B cell (primary cell): ENCODE measurements at regions of chr14 and their contacts with region 1.

Region 1: DNA sequence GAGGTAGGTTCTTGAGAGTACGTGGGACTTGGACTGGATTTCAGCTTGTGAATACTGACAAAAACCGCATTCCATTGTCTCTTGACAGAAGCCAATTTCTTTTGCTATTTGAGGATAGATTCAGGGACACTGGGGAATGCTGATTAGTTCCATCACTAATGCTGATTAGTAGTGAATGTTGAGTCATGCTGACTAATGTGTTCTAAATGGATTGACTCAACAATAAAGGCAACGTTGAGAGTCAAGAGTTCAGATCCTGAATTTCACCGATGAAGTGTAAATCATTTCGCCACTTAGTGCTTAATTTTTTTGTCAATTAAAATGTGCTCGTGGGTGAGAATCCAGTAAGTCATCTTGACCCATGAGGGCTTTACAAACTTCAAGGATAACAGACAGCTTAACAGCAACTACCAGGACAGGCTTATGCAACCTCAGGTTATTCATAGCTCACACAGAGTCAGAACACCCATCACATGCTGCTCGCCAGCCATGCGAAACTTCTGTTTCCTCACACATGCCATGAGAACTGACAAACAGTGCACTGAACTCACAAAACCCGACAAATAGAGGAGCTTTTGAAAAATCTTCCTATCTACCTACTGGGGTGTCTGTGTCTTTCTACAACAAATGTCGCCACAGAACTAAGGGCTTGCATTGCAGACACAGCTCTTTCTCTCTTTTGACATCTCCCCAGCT is 316.5 kb downstream of the ZFP36L1 start:
- DNase-seq: peak; percentile 89
- ATAC-seq: peak; percentile 90
- H3K4me3 ChIP-seq: peak overlapping the region in 1 of 5 experiments; percentile 21
- H3K4me3 Mint-ChIP-seq: peak overlapping the region; percentile 72
- H3K27ac ChIP-seq: peak overlapping the region; percentile 95 to 99
- H3K27ac Mint-ChIP-seq: peak overlapping the region; percentile 98
- H3K4me1 ChIP-seq: peaks cover 73 to 77% of the 10 kb centered on the region in 2 donors
- H3K4me1 Mint-ChIP-seq: peaks cover 84% of the 10 kb centered on the region
- H3K27me3 ChIP-seq: no peaks in the 10 kb centered on the region
- H3K27me3 Mint-ChIP-seq: no peaks in the 10 kb centered on the region
- CTCF ChIP-seq: no peak

Region 2: GRCh38 chr14:68268197-68268596 is 208.2 kb before region 1 on chr14:
- CTCF ChIA-PET with region 1: no interaction called
- POLR2A ChIA-PET with region 1: no interaction called
- intact Hi-C with region 1: loop called (anchors 5 kb)
- DNase-seq: peak; percentile 92
- ATAC-seq: peak; percentile 71
- H3K4me3 ChIP-seq: peak overlapping the region in 1 of 5 experiments; percentile 14
- H3K4me3 Mint-ChIP-seq: peak overlapping the region; percentile 72
- H3K27ac ChIP-seq: peak overlapping the region; percentile 78 to 94
- H3K27ac Mint-ChIP-seq: peak overlapping the region; percentile 95
- H3K4me1 ChIP-seq: peaks cover 78 to 89% of the 10 kb centered on the region in 2 donors
- H3K4me1 Mint-ChIP-seq: peaks cover 80% of the 10 kb centered on the region
- H3K27me3 ChIP-seq: no peaks in the 10 kb centered on the region
- H3K27me3 Mint-ChIP-seq: no peaks in the 10 kb centered on the region
- CTCF ChIP-seq: no peak

Region 3: DNA sequence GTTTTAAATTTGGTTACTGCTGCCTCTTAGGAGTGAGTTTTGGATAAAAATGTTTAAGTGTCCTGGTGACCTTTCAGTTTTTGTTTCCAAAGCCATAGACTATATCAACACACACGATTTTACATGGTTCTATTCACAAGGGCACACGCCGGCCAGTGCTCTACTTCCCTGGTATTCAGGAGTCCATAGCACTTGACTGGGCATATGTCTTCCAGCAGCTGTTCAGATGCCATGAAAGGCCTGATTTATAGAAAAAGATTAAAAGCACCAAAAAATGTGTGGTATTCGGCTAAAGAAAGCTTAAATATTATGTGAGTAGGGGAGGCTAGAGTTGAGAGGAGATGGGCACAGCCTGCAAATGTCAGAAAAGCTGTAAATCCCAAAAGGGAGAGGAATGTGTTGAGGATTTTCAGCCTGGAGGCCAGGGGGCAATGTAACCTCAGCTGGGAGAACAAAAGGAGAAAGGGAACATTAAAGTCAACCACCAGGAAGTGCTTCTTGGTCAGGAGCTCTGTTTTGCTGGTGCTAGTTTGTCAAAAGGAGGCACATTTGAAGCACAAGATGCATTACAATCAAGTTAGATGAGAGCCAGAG is 178.4 kb before region 1 on chr14:
- CTCF ChIA-PET with region 1: no interaction called
- POLR2A ChIA-PET with region 1: interaction called, 11 read pairs
- intact Hi-C with region 1: no loop called
- DNase-seq: peak; percentile 5
- ATAC-seq: no peak
- H3K4me3 ChIP-seq: no peak overlapping the region
- H3K4me3 Mint-ChIP-seq: no peak overlapping the region
- H3K27ac ChIP-seq: peak overlapping the region in 1 of 2 donors; percentile 15
- H3K27ac Mint-ChIP-seq: peak overlapping the region; percentile 72
- H3K4me1 ChIP-seq: peaks cover 38 to 41% of the 10 kb centered on the region in 2 donors
- H3K4me1 Mint-ChIP-seq: peaks cover 60% of the 10 kb centered on the region
- H3K27me3 ChIP-seq: no peaks in the 10 kb centered on the region
- H3K27me3 Mint-ChIP-seq: no peaks in the 10 kb centered on the region
- CTCF ChIP-seq: no peak

Region 4: GRCh38 chr14:68444449-68445168 is 31.8 kb before region 1 on chr14:
- CTCF ChIA-PET with region 1: no interaction called
- POLR2A ChIA-PET with region 1: interaction called, 11 read pairs
- intact Hi-C with region 1: no loop called
- DNase-seq: no peak
- ATAC-seq: no peak
- H3K4me3 ChIP-seq: no peak overlapping the region
- H3K4me3 Mint-ChIP-seq: no peak overlapping the region
- H3K27ac ChIP-seq: no peak overlapping the region
- H3K27ac Mint-ChIP-seq: no peak overlapping the region
- H3K4me1 ChIP-seq: peaks cover 3 to 5% of the 10 kb centered on the region in 2 donors
- H3K4me1 Mint-ChIP-seq: peaks cover 16% of the 10 kb centered on the region
- H3K27me3 ChIP-seq: no peaks in the 10 kb centered on the region
- H3K27me3 Mint-ChIP-seq: no peaks in the 10 kb centered on the region
- CTCF ChIP-seq: no peak

Region 5: GRCh38 chr14:68495101-68496039 is 19.0 kb after region 1 on chr14:
- CTCF ChIA-PET with region 1: interaction called, 4 read pairs
- POLR2A ChIA-PET with region 1: interaction called, 3 read pairs
- intact Hi-C with region 1: loop called (anchors 2 kb)
- DNase-seq: peak; percentile 58
- ATAC-seq: peak; percentile 83
- H3K4me3 ChIP-seq: peak overlapping the region in 1 of 5 experiments; percentile 13
- H3K4me3 Mint-ChIP-seq: peak overlapping the region; percentile 56
- H3K27ac ChIP-seq: peak overlapping the region; percentile 11 to 61
- H3K27ac Mint-ChIP-seq: peak overlapping the region; percentile 82
- H3K4me1 ChIP-seq: peaks cover 35 to 54% of the 10 kb centered on the region in 2 donors
- H3K4me1 Mint-ChIP-seq: peaks cover 63% of the 10 kb centered on the region
- H3K27me3 ChIP-seq: no peaks in the 10 kb centered on the region
- H3K27me3 Mint-ChIP-seq: no peaks in the 10 kb centered on the region
- CTCF ChIP-seq: no peak